ENCODE measurements at regions of chr21 and their contacts with region 1.

Region 1: GRCh38 chr21:43938751-43939442 is 73.2 kb upstream of the TRAPPC10 start:
- H3K4me3 ChIP-seq: peak overlapping the region; percentile 22
- H3K27ac ChIP-seq: no peak overlapping the region; the same call in 1 of the 2 replicates
- H3K4me1 ChIP-seq: peaks cover 4% of the 10 kb centered on the region; the same call in 1 of the 2 replicates
- CTCF ChIP-seq: peak; percentile 99

Region 2: GRCh38 chr21:43810505-43811261 is 128.2 kb before region 1 on chr21:
- CTCF ChIA-PET with region 1: interaction called, 10 read pairs
- POLR2A ChIA-PET with region 1: interaction called, 3 read pairs
- H3K4me3 ChIP-seq: no peak overlapping the region
- H3K27ac ChIP-seq: no peak overlapping the region
- H3K4me1 ChIP-seq: no peaks in the 10 kb centered on the region
- CTCF ChIP-seq: peak; percentile 98

Region 3: DNA sequence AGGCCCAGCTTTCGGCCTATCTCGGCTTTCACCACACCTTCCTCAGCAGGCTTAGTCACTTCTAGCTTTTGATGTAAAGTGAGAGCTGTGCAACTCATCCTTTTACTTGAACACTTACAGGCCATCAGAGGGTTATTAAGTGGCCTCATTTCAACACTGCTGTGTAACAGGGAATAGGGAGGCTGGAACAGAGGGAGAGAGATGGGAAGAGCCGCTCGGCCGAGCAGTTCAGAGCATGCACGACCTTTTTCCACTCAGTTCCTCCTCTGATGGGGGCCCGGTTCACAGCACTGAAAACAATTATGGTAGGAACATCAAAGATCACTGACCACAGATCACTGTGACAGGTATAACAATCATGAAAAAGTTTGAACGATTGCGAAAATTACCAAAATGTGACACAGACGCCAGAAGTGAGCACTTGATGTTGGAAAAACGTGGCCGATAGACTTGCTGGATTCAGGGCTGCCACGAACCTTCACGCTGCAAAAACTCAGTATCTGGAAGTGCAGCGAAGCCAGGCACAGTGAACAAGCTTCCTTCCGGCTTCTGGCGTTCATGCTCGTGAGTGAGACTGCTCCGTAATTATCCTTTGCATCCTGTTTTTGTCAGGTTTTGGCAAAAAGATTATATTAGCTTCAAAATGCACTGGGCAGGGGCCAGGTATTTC is 45.2 kb before region 1 on chr21:
- CTCF ChIA-PET with region 1: interaction called, 12 read pairs
- POLR2A ChIA-PET with region 1: no interaction called
- H3K4me3 ChIP-seq: no peak overlapping the region
- H3K27ac ChIP-seq: peak overlapping the region; percentile 25; the same call in 1 of the 2 replicates
- H3K4me1 ChIP-seq: peaks cover 8% of the 10 kb centered on the region; the same call in 1 of the 2 replicates
- CTCF ChIP-seq: no peak

Region 4: GRCh38 chr21:43921979-43922945 is 16.6 kb before region 1 on chr21:
- CTCF ChIA-PET with region 1: interaction called, 20 read pairs
- POLR2A ChIA-PET with region 1: no interaction called
- H3K4me3 ChIP-seq: no peak overlapping the region
- H3K27ac ChIP-seq: no peak overlapping the region
- H3K4me1 ChIP-seq: peaks cover 4% of the 10 kb centered on the region
- CTCF ChIP-seq: no peak

Region 5: DNA sequence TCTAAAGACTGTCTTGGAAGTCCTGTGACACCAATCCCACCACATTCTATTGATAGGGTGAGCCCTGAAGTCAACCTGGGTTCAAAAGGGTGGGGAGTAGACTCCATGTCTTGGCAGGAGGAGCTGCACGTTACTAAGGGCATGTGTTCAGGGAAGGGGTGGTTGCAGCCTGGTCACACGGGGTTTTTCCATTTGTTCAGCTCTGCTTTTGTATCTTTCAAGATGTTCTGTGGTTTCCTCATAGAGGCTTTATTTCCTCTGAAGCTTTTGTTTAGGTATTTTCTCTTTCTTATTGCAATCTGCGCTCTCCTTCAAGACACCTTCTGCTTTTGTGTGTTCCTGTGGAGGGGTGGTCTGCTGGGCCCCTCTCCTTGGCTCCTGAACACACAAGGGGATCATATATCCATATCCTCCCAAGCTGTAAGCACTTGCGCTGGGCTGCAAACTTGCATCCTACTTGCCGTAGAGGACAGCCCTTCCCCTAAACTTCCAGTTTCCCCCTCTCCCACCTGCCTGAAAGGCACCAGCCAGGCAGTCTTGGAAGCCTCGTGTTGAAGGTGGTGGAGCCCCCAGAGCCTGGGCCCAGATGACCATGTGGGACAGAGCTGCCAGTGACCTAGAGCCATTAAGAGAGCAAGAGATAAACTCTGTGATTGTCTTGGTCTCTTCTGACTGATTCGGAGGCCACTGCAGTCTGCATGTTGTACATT is 10.8 kb after region 1 on chr21:
- CTCF ChIA-PET with region 1: interaction called, 23 read pairs
- POLR2A ChIA-PET with region 1: no interaction called
- H3K4me3 ChIP-seq: no peak overlapping the region
- H3K27ac ChIP-seq: no peak overlapping the region
- H3K4me1 ChIP-seq: no peaks in the 10 kb centered on the region
- CTCF ChIP-seq: no peak